ENCODE measurements at regions of chr1 and their contacts with region 1.

Region 1: GRCh38 chr1:230957580-230957989 is 21.1 kb downstream of the TTC13 start:
- DNase-seq: peak; percentile 50
- ATAC-seq: peak; percentile 65
- H3K4me3 ChIP-seq: no peak overlapping the region
- H3K4me3 Mint-ChIP-seq: peak overlapping the region; percentile 88
- H3K27ac ChIP-seq: peak overlapping the region; percentile 56 to 67
- H3K27ac Mint-ChIP-seq: peak overlapping the region; percentile 92
- H3K4me1 ChIP-seq: peaks cover 24 to 27% of the 10 kb centered on the region in 2 donors
- H3K4me1 Mint-ChIP-seq: peaks cover 44% of the 10 kb centered on the region
- H3K27me3 ChIP-seq: no peaks in the 10 kb centered on the region
- H3K27me3 Mint-ChIP-seq: no peaks in the 10 kb centered on the region
- CTCF ChIP-seq: no peak

Region 2: DNA sequence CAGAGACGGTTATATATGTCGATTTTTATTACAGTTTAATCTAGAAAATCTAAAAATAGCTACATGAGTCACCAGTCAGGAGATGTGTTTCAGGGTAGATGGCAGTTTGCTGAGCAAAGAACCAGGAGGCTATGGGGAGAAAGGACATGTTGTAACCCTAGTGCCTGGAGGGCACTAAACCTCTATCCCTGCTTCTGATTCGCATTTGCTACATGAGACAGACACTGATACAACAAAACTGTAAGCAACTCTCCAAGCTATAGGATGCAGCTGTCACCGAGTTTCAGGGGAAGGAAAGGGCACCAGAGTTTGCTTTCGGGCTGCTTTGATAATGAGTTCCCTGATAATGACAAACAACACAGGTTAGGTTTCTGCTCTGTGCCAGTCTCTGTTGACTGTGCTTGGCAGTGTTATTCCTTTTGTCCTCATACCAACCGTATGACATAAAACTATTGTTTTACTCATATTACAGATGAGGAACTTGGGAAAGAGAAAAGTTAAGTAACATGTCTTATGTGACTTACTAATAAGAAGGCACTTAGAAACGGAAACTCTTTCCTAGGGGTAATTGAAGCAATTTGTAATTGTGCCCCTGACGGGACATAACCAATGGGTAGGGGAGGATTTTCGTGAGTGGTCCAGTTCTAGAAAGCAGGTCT is 132.4 kb before region 1 on chr1:
- CTCF ChIA-PET with region 1: no interaction called
- POLR2A ChIA-PET with region 1: no interaction called
- intact Hi-C with region 1: no loop called
- DNase-seq: no peak
- ATAC-seq: no peak
- H3K4me3 ChIP-seq: no peak overlapping the region
- H3K4me3 Mint-ChIP-seq: no peak overlapping the region
- H3K27ac ChIP-seq: no peak overlapping the region
- H3K27ac Mint-ChIP-seq: no peak overlapping the region
- H3K4me1 ChIP-seq: no peaks in the 10 kb centered on the region
- H3K4me1 Mint-ChIP-seq: no peaks in the 10 kb centered on the region
- H3K27me3 ChIP-seq: no peaks in the 10 kb centered on the region
- H3K27me3 Mint-ChIP-seq: peaks cover 15% of the 10 kb centered on the region
- CTCF ChIP-seq: no peak

Region 3: DNA sequence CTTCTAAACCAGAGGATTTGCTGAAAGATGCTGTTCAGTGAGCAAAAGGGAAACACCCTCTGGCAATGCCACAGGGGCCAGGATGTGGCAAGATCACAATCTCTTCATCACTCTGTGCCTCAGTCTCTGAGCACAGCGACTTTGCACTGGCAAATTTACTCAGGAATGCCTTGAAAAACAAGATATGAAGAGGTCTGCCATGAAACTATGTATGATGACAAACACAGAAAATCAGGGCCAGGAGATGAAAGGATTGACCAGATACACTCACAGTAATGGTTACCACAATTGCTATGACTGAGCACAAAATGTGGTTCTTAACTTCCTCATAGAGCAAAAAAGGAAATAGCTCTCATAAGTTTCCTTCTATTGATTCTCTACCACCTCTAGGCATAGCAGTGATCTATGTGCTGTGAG is 15.3 kb after region 1 on chr1:
- CTCF ChIA-PET with region 1: interaction called, 12 read pairs
- POLR2A ChIA-PET with region 1: interaction called, 3 read pairs
- intact Hi-C with region 1: loop called (anchors 2 kb)
- DNase-seq: peak; percentile 66
- ATAC-seq: peak; percentile 76
- H3K4me3 ChIP-seq: peak overlapping the region in 2 of 5 experiments; percentile 16 to 42
- H3K4me3 Mint-ChIP-seq: peak overlapping the region; percentile 70
- H3K27ac ChIP-seq: peak overlapping the region; percentile 19 to 51
- H3K27ac Mint-ChIP-seq: peak overlapping the region; percentile 91
- H3K4me1 ChIP-seq: peaks cover 34 to 61% of the 10 kb centered on the region in 2 donors
- H3K4me1 Mint-ChIP-seq: peaks cover 68% of the 10 kb centered on the region
- H3K27me3 ChIP-seq: no peaks in the 10 kb centered on the region
- H3K27me3 Mint-ChIP-seq: no peaks in the 10 kb centered on the region
- CTCF ChIP-seq: no peak